ENCODE measurements at regions of chr13 and their contacts with region 1.

Region 1: GRCh38 chr13:106100171-106100919 is 435.1 kb downstream of the EFNB2 start:
- DNase-seq: peak; percentile 46
- ATAC-seq: peak; percentile 28
- H3K4me3 ChIP-seq: no peak overlapping the region
- H3K27ac ChIP-seq: peak overlapping the region; percentile 48
- H3K4me1 ChIP-seq: peaks cover 87 to 93% of the 10 kb centered on the region in 2 experiments
- H3K27me3 ChIP-seq: no peaks in the 10 kb centered on the region
- CTCF ChIP-seq: no peak
- POLR2A ChIP-seq: no peak
- RAD21 ChIP-seq: peak; percentile 5; the same call in 1 of the 2 replicates

Region 2: GRCh38 chr13:105627270-105627669 is 473.1 kb before region 1 on chr13:
- CTCF ChIA-PET with region 1: no interaction called
- POLR2A ChIA-PET with region 1: no interaction called
- RAD21 ChIA-PET with region 1: no interaction called
- intact Hi-C with region 1: no loop called
- DNase-seq: no peak
- ATAC-seq: no peak
- H3K4me3 ChIP-seq: no peak overlapping the region
- H3K27ac ChIP-seq: no peak overlapping the region
- H3K4me1 ChIP-seq: no peaks in the 10 kb centered on the region
- H3K27me3 ChIP-seq: no peaks in the 10 kb centered on the region
- CTCF ChIP-seq: no peak
- POLR2A ChIP-seq: no peak
- RAD21 ChIP-seq: no peak

Region 3: GRCh38 chr13:105918842-105919741 is 181.3 kb before region 1 on chr13:
- CTCF ChIA-PET with region 1: no interaction called
- POLR2A ChIA-PET with region 1: no interaction called
- RAD21 ChIA-PET with region 1: no interaction called
- intact Hi-C with region 1: loop called (anchors 5 kb)
- DNase-seq: peak; percentile 88
- ATAC-seq: peak; percentile 93
- H3K4me3 ChIP-seq: peak overlapping the region; percentile 19 to 48
- H3K27ac ChIP-seq: peak overlapping the region; percentile 75
- H3K4me1 ChIP-seq: peaks cover 22 to 40% of the 10 kb centered on the region in 2 experiments
- H3K27me3 ChIP-seq: no peaks in the 10 kb centered on the region
- CTCF ChIP-seq: no peak
- POLR2A ChIP-seq: peak; percentile 61
- RAD21 ChIP-seq: peak; percentile 41

Region 4: DNA sequence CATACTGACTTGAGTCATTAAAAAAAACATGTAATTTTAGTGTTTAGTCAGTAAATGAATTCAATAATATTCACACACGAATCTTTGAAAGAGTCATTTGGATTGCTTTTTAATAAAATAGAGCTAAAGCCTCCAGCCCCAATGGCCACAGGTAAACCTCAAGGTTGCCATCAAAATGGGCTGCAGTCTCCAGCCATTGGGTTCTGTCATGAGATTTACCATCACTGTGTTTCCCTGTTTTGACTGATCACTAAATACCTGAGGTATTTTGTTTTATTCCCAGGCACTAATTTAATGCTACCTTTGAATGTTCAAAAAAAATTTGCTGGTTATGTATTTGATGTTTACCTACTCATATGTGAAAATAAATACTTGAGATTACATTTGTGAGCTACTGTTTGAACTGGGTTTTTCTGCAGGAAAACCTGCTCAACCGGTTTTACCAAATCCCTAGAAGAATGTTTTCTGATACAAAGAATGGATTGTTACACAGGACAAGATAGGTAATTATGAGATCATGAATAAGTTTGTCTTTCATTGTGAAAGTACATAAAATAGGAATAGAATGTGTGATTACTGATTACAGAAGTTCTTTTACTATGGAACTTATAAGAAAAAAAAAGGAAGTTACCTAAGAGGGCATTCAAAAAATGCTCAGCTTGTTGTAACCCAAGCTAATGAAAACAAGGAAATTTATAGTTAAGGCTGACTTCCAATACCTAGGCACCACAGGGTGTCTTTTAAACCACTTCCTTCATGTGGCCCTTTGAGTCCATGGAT is 43.8 kb after region 1 on chr13:
- CTCF ChIA-PET with region 1: no interaction called
- POLR2A ChIA-PET with region 1: no interaction called
- RAD21 ChIA-PET with region 1: interaction called in 1 of 2 experiments, 4 read pairs
- intact Hi-C with region 1: loop called (anchors 5 kb)
- DNase-seq: peak; percentile 82
- ATAC-seq: peak; percentile 71
- H3K4me3 ChIP-seq: peak overlapping the region in 1 of 2 experiments; percentile 25; a peak in 2 of 4 replicates
- H3K27ac ChIP-seq: peak overlapping the region; percentile 73
- H3K4me1 ChIP-seq: peaks cover 48 to 57% of the 10 kb centered on the region in 2 experiments
- H3K27me3 ChIP-seq: no peaks in the 10 kb centered on the region
- CTCF ChIP-seq: no peak
- POLR2A ChIP-seq: no peak
- RAD21 ChIP-seq: peak; percentile 32; the same call in 1 of the 2 replicates